ENCODE measurements at regions of chr1 and their contacts with region 1.

Region 1: GRCh38 chr1:65419681-65420589 is 533 bp upstream of the LEPR start:
- DNase-seq: peak; percentile 99
- H3K4me3 ChIP-seq: peak overlapping the region; percentile 82 to 93 (median 88)
- H3K27ac ChIP-seq: peak overlapping the region; percentile 94 to 99 (median 98)
- H3K4me1 ChIP-seq: peaks cover 14 to 43% (median 39%) of the 10 kb centered on the region in 4 donors
- H3K27me3 ChIP-seq: no peaks in the 10 kb centered on the region
- CTCF ChIP-seq: no peak
- EP300 ChIP-seq: no peak
- POLR2A ChIP-seq: no peak

Region 2: DNA sequence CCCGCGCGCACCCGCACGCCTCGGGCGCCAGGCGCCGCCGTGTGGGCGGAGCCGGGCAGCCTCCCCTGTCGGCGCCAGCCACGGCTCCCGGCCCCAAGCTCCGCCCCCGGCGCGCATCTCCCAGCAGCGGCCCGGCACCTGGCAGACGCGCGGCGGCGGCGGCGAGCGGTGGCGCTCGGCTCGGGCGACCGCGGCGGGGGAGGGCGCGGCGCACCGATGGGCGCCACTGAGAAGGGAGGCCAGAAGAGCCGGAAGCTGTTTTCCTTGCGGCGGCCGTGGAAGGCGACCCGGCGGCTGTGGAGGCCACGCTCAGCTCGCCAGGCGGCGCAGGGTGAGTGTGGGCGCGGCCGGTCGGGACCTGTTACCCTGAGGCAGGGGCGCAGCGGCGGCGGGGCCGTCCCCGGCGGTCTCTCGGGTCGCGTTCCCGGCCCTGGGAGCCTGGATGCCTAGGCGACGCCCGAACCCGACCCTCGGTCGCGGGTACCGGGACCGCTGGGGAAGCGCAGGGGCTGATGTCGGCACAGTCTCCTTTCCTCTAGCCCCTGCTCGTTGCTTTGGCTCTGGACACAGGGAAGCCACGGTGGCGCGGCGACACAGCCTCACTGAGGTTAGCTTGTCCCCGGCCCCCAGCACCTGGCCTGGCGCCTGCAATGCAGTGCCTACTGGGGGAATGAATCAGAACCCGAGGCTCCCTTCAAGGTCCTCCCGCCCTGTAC is 165.5 kb before region 1 on chr1:
- intact Hi-C with region 1: loop called (anchors 10 kb)
- DNase-seq: peak; percentile 92
- H3K4me3 ChIP-seq: peak overlapping the region; percentile 72 to 90 (median 82)
- H3K27ac ChIP-seq: peak overlapping the region; percentile 60 to 74 (median 72)
- H3K4me1 ChIP-seq: peaks cover 12 to 22% (median 18%) of the 10 kb centered on the region in 4 donors
- H3K27me3 ChIP-seq: no peaks in the 10 kb centered on the region
- CTCF ChIP-seq: peak in 1 of 3 experiments; percentile 25
- EP300 ChIP-seq: no peak
- POLR2A ChIP-seq: no peak

Measured in esophagus muscularis mucosa (tissue), 4 donors.